Body of pancreas (tissue), 4 donors: ENCODE measurements at regions of chr19 and their contacts with region 1.

Region 1: GRCh38 chr19:2537584-2538433 is 61.9 kb downstream of the GADD45B start:
- DNase-seq: no peak
- ATAC-seq: no peak
- H3K4me3 ChIP-seq: no peak overlapping the region
- H3K27ac ChIP-seq: no peak overlapping the region
- H3K4me1 ChIP-seq: peaks cover 61% of the 10 kb centered on the region
- H3K27me3 ChIP-seq: no peaks in the 10 kb centered on the region
- CTCF ChIP-seq: no peak
- POLR2A ChIP-seq: no peak

Region 2: GRCh38 chr19:2488942-2489731 is 48.7 kb before region 1 on chr19:
- intact Hi-C with region 1: no loop called
- DNase-seq: peak; percentile 72 to 83 (median 78)
- ATAC-seq: peak; percentile 69
- H3K4me3 ChIP-seq: no peak overlapping the region
- H3K27ac ChIP-seq: peak overlapping the region in 1 of 4 donors; percentile 55
- H3K4me1 ChIP-seq: peaks cover 37% of the 10 kb centered on the region
- H3K27me3 ChIP-seq: no peaks in the 10 kb centered on the region
- CTCF ChIP-seq: no peak
- POLR2A ChIP-seq: no peak

Region 3: GRCh38 chr19:2503521-2504109 is 34.2 kb before region 1 on chr19:
- intact Hi-C with region 1: loop called (anchors 5 kb)
- DNase-seq: no peak
- ATAC-seq: no peak
- H3K4me3 ChIP-seq: no peak overlapping the region
- H3K27ac ChIP-seq: no peak overlapping the region
- H3K4me1 ChIP-seq: peaks cover 22% of the 10 kb centered on the region
- H3K27me3 ChIP-seq: no peaks in the 10 kb centered on the region
- CTCF ChIP-seq: no peak
- POLR2A ChIP-seq: no peak